ENCODE measurements at regions of chr13 and their contacts with region 1.

Region 1: DNA sequence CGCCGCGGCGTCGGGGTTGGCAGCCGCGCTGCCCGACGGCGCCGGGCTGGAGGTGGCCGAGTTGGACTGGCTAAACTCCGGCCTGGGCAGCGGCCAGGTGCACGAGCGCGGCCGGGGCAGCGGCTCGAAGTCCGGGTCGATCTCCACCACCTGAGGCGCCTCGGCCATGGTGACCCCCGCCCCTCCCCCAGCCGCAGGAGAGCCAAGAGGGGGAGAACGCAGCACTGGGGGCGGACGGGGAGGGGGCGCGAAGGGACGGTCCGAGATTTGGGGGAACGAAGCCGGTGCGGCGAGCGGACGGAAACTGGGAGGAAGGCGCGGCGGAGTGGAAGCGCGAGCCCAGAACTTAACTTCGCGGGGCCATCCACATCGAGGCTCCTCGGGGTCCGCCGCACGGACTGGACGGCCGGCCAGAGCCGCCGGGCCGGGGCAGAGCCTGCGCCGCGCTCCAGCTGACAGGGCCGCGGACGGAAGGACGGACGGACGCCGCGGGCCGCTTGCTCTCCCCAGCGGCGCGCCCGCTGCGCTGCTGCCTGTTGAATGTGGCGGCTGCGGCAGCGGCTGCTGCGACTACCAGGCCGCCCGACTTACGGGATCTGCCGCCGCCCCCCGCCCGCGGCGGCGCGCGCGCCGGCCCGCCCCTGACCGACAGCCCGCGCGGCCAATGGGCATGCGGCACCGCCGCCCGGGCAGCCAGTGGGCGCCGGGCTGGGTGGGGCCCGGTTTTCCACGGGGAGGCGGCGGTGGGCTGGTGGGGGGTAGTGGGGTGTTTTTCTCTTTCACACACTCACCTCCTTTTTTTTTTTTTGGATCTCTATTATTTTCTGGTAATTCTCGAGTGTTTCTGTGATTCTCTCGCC is at the start of gene FOXO1:
- DNase-seq: peak; percentile 87
- H3K4me3 Mint-ChIP-seq: peak within 1 kb of the TSS; percentile 86
- H3K27ac Mint-ChIP-seq: peak within 1 kb of the TSS; percentile 93
- H3K4me1 Mint-ChIP-seq: peaks cover 33% of the 10 kb centered on the region
- H3K27me3 Mint-ChIP-seq: no peaks in the 10 kb centered on the region
- total RNA-seq, gene FOXO1: 38.2 and 38.3 TPM in 2 replicates

Region 2: DNA sequence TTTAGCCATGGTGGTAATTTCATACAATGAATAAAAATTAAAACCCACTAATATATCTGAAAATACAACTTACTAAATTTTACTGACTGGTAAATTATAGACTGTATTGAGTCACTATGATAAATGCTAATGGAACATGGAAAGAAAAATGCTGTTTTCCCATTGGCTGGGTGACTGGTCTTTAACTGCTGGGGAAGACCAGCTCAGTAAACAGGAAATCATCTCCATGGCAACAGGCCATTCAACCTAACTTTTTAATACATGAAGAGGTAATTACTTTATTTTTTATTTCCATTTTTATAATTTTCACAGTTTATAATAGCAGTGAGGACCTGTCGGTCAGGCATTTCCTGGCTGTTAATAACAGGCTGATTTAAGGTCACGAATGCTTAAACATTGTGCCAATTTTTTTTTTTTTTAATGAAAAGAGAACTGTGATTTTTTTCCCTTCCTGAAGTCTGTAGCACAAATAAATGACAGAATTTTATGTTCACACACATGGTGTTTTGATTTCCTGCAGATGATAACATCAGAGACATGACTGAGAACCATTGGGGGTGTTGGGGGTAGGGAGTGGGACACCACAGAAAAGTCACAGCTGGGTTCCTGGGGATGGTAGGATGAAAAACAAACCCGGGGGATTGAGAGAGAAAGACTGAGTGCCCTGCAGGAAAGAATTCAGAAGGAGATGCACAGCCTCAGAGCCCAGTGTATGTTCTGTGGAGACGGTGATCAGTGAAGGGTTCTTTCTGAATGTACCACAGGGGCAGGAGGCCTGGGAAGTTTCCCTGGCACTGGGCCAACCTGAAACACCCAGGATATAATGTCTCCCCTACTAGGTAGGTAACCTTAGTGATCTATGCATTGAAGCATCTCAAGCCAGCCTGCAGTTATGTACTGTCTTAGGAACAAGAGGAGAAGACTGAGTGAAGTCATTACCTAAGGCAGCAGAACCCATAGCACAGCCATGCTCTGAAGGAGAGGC is 713.7 kb before region 1 on chr13:
- intact Hi-C with region 1: loop called (anchors 10 kb)
- DNase-seq: no peak
- H3K4me3 Mint-ChIP-seq: no peak overlapping the region
- H3K27ac Mint-ChIP-seq: peak overlapping the region; percentile 6
- H3K4me1 Mint-ChIP-seq: peaks cover 42% of the 10 kb centered on the region
- H3K27me3 Mint-ChIP-seq: peaks cover 6% of the 10 kb centered on the region

Region 3: GRCh38 chr13:40102856-40103255 is 563.4 kb before region 1 on chr13:
- intact Hi-C with region 1: loop called (anchors 1 kb)
- DNase-seq: no peak
- H3K4me3 Mint-ChIP-seq: peak overlapping the region; percentile 60
- H3K27ac Mint-ChIP-seq: peak overlapping the region; percentile 96
- H3K4me1 Mint-ChIP-seq: peaks cover 47% of the 10 kb centered on the region
- H3K27me3 Mint-ChIP-seq: no peaks in the 10 kb centered on the region

Region 4: DNA sequence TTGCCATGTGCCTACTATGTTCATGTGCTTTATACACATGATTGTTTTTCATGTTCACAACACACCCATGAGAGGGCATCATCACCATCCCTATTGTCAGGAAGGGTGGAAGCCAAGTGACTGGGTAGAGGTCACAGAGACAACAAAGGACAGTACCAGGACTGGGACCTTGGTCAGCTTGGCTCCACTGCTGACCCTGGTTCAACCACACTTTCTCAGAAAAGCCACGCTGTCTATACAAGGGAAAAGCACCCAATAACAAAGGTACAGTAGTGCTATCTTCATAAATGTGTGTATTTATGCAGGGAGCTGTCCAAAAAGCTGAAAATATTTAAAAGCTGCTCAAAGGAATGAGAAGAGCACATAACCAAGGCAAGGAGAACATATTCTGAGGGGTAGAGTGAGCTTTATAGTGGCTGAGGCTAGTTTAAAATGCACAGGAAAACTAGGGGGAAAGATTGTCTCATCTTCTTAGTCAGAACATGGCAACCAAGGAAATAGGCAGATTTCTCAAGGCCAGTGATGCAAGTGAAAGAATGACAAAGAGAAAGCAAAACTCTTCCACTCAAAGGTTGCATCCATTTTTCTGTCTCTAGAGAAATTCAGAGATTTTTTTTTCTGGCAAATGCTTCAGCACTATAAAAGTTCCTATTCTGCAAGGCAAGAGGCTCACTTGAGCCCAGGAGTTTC is 414.8 kb before region 1 on chr13:
- intact Hi-C with region 1: loop called (anchors 2 kb)
- DNase-seq: no peak
- H3K4me3 Mint-ChIP-seq: no peak overlapping the region
- H3K27ac Mint-ChIP-seq: peak overlapping the region; percentile 75
- H3K4me1 Mint-ChIP-seq: peaks cover 32% of the 10 kb centered on the region
- H3K27me3 Mint-ChIP-seq: no peaks in the 10 kb centered on the region

Region 5: DNA sequence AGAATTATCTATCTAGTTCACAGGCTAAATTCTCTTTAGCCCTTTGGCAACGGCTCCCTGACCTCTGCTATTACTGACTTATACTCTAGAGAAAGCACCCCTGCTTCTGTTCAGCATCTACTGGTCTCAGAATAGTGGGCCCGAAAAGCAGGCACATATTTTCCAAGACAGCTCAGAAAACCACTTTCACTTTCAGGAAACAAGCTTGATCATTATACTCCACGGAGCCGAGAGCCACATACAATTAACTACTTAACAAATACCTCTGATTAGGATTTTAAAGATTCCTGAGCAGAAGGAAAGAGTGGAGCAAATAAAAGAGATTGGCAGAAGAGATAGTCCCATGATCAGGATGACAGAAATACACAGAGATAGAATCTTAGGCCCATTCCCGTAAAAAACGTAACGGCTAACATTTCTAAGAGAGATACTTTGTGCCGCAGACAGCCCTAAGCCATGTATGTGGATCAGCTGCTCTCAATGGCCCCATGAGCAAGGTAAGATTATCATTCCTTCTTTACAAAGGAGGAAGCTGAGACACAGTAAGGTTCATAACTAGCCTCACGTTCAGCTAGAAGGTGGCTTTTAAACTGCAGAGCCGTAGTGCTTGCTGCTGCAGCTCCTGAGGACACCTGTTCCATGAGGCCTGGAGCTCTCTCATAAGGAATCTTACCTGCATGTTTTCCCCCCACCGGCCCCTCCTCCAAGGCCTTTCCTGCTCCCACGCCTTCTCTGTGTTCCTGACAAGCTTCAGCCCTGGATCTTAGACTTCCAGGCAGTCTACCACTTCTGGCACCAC is 227.1 kb before region 1 on chr13:
- intact Hi-C with region 1: loop called (anchors 2 kb)
- DNase-seq: no peak
- H3K4me3 Mint-ChIP-seq: peak overlapping the region; percentile 52
- H3K27ac Mint-ChIP-seq: peak overlapping the region; percentile 78
- H3K4me1 Mint-ChIP-seq: peaks cover 30% of the 10 kb centered on the region
- H3K27me3 Mint-ChIP-seq: no peaks in the 10 kb centered on the region

Region 6: GRCh38 chr13:40613192-40613818 is 53.0 kb before region 1 on chr13:
- intact Hi-C with region 1: loop called (anchors 1 kb)
- DNase-seq: peak; percentile 55
- H3K4me3 Mint-ChIP-seq: peak overlapping the region; percentile 80
- H3K27ac Mint-ChIP-seq: peak overlapping the region; percentile 95
- H3K4me1 Mint-ChIP-seq: peaks cover 64% of the 10 kb centered on the region
- H3K27me3 Mint-ChIP-seq: no peaks in the 10 kb centered on the region

Region 7: GRCh38 chr13:41004875-41005693 is 338.8 kb after region 1 on chr13:
- intact Hi-C with region 1: loop called (anchors 5 kb)
- DNase-seq: no peak
- H3K4me3 Mint-ChIP-seq: peak overlapping the region; percentile 64
- H3K27ac Mint-ChIP-seq: peak overlapping the region; percentile 96
- H3K4me1 Mint-ChIP-seq: peaks cover 63% of the 10 kb centered on the region
- H3K27me3 Mint-ChIP-seq: no peaks in the 10 kb centered on the region